Left colon (tissue), 2 donors: ENCODE measurements at regions of chr12 and their contacts with region 1.

Region 1: DNA sequence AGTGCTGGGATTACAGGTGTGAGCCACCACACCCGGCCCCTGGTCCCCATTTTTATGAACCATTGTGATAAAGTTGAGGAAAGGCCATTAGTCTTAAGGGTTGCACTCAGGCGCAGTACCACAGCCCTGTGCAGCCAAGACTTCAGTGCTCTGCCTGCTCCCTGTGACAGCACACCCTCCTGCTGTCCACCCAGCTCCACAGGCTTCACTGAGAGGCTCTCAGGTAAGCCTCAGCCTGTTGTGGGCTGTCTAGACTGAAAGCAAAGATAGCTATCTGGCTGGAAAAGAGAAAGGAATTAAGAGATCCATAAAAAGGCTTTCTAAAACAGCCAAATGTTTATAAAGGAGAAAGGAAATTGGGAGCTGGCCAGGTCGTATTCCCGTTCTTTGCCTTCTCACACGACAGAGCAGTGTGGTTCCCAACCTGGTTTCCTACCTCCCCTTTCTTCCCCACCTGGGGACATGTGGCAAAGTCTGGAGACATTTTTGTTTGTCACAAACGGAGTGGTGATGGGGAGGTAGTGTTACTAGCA is 19.1 kb upstream of the DNM1L start:
- DNase-seq: no peak
- ATAC-seq: peak; percentile 59

Region 2: DNA sequence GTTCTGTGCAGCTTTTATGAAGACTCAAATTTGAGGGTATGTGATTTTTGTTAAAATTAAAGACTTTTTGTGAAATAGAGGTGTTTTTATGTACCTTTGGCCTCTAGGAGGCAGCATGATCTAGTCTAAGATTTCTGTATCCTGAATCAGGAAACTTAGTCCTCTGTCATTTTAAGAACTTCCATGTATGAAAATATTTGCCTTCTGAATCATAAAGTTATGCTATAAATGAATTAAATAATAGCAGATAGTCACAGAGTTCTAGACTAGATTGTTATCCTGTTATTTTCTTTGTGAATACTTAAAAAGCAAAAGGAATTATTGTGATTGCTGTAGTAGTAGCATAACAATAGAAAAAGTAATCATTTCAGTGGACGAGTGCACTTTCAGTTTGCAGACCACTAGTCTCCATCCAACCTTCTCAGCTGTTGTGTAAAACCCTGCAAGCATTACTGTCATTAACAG is 204.3 kb before region 1 on chr12:
- intact Hi-C with region 1: loop called in 1 of 2 experiments (anchors 5 kb)
- DNase-seq: no peak
- ATAC-seq: peak; percentile 61